ENCODE measurements at regions of chr1 and their contacts with region 1.

Region 1: GRCh38 chr1:28505406-28506187 is at the start of gene RCC1:
- DNase-seq: peak; percentile 94 to 98 (median 97)
- H3K4me3 ChIP-seq: peak within 1 kb of the TSS; percentile 76 to 96
- H3K4me3 Mint-ChIP-seq: peak within 1 kb of the TSS; percentile 94 to 100 (median 98)
- H3K27ac ChIP-seq: peak within 1 kb of the TSS; percentile 66
- H3K27ac Mint-ChIP-seq: peak within 1 kb of the TSS; percentile 96 to 99 (median 98)
- H3K4me1 ChIP-seq: peaks cover 37% of the 10 kb centered on the region
- H3K4me1 Mint-ChIP-seq: peaks cover 29 to 53% (median 38%) of the 10 kb centered on the region in 4 donors
- H3K27me3 ChIP-seq: no peaks in the 10 kb centered on the region
- H3K27me3 Mint-ChIP-seq: no peaks in the 10 kb centered on the region
- total RNA-seq, gene RCC1: 16.7 to 18.4 TPM

Region 2: DNA sequence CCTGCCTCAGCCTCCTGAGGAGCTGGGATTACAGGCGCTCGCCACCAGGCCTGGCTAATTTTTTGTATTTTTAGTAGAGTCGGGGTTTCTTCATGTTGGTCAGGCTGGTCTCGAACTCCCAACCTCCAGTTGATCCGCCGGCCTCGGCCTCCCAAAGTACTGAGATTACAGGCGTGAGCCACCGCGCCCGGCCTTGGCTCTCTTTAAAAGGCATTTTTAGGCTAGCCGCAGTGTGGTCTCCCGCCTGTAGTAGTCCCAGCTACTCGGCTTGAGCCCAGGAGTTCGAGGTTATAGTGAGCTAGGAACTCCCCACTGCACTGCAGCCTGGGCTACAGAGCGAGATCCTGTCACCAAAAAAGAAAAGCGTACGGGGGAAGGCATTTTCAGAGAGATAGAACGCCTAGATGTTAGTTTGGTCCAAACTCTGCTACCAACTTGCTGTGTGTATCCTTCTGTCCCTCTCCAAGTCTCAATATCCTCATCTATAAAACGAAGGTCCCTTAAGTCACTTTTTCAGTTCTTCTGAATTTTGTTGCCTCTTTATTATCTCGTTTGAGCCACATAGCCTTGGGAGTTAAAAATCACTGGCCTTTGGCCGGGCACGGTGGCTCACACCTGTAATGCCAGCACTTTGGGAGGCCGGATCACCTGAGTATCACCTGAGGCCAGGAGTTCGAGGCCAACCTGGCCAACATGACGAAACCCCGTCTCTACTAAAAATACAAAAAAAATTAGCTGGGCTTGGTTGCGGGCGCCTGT is 176.0 kb before region 1 on chr1:
- CTCF ChIA-PET with region 1: no interaction called
- POLR2A ChIA-PET with region 1: interaction called, 10 read pairs
- intact Hi-C with region 1: loop called (anchors 1 kb)
- DNase-seq: no peak
- H3K4me3 ChIP-seq: peak overlapping the region; percentile 51 to 53
- H3K4me3 Mint-ChIP-seq: peak overlapping the region; percentile 94 to 96 (median 95)
- H3K27ac ChIP-seq: peak overlapping the region; percentile 84
- H3K27ac Mint-ChIP-seq: peak overlapping the region; percentile 97 to 100 (median 99)
- H3K4me1 ChIP-seq: peaks cover 29% of the 10 kb centered on the region
- H3K4me1 Mint-ChIP-seq: peaks cover 19 to 39% (median 26%) of the 10 kb centered on the region in 4 donors
- H3K27me3 ChIP-seq: no peaks in the 10 kb centered on the region
- H3K27me3 Mint-ChIP-seq: peaks cover 0 to 2% of the 10 kb centered on the region in 2 donors

Region 3: DNA sequence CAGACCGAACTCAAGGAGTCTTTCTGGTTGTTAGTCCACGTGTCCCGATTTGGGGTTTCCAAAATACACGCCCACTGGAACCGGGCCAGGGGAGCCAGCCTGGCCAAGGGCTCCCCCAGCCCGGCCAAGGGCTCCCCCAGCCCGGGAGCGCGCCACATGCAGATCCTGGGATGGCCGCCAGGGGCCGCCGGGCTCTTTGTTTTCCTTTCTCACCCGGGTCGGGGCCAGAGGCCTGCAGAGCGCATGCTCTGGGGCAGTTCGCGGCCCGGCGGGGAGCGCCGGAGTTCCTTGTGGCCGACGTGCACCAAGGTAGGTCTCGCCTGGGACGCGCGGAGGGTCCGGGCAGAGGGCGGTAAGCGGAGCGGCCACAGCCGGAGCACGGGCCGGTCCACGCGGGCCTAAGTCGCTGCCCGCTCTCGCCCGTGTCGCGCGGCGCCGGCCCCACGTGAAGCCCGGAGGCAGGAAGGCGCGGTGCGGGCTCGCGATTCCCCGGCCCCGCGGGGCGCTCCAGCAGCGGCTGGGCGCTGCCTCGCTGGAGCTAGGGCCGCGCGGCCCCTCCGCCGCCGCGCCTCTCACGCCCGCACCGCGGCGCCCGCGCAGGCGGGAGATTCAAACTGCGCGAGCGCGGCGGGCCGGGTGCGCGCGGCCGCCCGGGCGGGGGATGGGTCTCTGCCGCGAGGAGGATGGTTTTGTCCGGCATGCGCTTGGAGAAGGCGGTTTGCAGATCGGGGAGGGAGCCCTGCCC is 12.6 kb after region 1 on chr1:
- CTCF ChIA-PET with region 1: interaction called, 7 read pairs
- POLR2A ChIA-PET with region 1: interaction called, 39 read pairs
- intact Hi-C with region 1: loop called (anchors 1 kb)
- DNase-seq: peak; percentile 84 to 87 (median 86)
- H3K4me3 ChIP-seq: peak overlapping the region; percentile 33 to 65
- H3K4me3 Mint-ChIP-seq: peak overlapping the region; percentile 85 to 92 (median 90)
- H3K27ac ChIP-seq: peak overlapping the region; percentile 56
- H3K27ac Mint-ChIP-seq: peak overlapping the region; percentile 67 to 94 (median 85)
- H3K4me1 ChIP-seq: peaks cover 27% of the 10 kb centered on the region
- H3K4me1 Mint-ChIP-seq: peaks cover 15 to 32% (median 21%) of the 10 kb centered on the region in 4 donors
- H3K27me3 ChIP-seq: no peaks in the 10 kb centered on the region
- H3K27me3 Mint-ChIP-seq: no peaks in the 10 kb centered on the region

Region 4: DNA sequence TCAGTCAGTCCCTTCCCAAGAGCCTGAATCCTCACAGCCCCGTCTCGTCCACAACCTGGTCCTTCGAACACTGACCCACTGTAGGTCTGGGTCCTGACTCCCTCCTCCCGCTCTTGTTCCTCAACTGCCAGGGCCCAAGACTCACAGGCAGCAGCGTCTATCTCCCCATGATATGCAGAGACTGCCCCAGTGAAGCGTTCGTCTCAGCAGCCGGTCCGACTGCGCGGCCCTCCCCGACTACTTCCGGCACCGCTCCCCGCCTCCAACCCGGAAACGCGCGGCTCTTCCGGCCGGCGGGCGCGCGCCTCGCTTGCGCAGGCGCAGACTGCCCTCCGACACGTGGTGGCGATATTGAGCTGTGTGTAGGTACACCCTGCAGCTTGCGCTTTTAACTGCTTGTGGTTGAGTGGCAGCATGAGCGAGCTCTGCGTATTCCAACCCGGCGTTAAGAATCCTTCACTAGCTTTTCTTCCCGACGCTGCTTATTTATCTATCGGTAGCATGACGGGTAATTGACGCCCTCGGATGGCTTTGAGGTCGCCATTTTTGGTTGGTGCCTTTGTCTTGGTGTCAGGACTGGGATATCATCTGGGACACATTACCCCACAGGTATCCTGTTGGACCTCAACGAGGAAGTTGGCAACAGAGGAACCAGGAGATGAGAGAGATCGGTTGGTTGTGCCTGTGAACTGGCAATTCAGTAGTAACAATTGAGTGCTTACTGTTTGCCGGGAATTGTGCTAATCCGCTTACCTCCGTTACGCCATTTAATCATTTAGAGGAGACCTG is 137.4 kb after region 1 on chr1 and contains the start of gene TAF12:
- CTCF ChIA-PET with region 1: interaction called, 3 read pairs
- POLR2A ChIA-PET with region 1: interaction called, 48 read pairs
- intact Hi-C with region 1: loop called (anchors 1 kb)
- DNase-seq: peak; percentile 88 to 92 (median 91)
- H3K4me3 ChIP-seq: peak within 1 kb of the TSS; percentile 89 to 99
- H3K4me3 Mint-ChIP-seq: peak within 1 kb of the TSS; percentile 96 to 100 (median 99)
- H3K27ac ChIP-seq: peak within 1 kb of the TSS; percentile 74
- H3K27ac Mint-ChIP-seq: peak within 1 kb of the TSS; percentile 97 to 100 (median 98)
- H3K4me1 ChIP-seq: peaks cover 48% of the 10 kb centered on the region
- H3K4me1 Mint-ChIP-seq: peaks cover 32 to 62% (median 46%) of the 10 kb centered on the region in 4 donors
- H3K27me3 ChIP-seq: no peaks in the 10 kb centered on the region
- H3K27me3 Mint-ChIP-seq: no peaks in the 10 kb centered on the region
- total RNA-seq, gene TAF12: 23.5 to 25.2 TPM

Region 5: DNA sequence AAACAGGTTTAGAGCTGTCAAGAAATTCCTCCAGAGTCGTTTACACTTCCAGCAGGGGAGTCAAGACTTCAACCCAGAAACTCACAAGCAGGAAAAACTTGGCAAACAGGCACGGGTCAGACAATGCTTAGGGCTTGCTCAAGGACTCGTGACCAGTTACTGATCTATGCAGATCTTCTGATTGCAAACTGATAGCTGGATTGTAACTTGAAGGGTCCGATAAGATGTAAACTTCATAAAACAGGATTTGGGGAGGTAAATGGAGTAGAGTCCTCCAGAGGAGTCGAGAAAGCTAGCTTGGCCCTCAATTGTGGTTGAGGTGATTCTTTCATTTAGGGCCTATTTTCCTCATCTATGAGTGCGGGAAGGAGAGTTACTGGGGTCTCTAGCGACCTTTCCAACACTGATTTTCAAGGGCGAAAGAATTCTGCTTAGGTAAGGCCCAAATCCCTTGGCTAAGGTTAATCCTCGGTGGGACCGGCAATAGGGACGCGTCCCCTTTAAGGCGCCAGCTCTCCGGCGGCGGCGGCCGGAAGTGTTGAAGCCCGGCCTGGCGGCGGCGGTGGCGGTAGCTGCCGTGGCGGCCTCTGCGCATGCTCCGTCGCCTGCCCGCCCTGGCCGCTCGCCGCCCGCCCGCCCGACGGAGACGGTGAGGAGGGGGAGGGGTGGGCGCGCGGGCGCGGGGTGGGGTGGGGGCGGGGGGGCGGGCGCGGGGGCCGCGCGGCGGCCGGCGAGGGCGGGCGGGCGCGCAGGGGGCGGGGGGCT is 162.8 kb after region 1 on chr1 and contains the start of gene GMEB1:
- CTCF ChIA-PET with region 1: no interaction called
- POLR2A ChIA-PET with region 1: interaction called, 29 read pairs
- intact Hi-C with region 1: loop called (anchors 1 kb)
- DNase-seq: peak; percentile 79 to 86 (median 84)
- H3K4me3 ChIP-seq: peak within 1 kb of the TSS; percentile 89 to 92
- H3K4me3 Mint-ChIP-seq: peak within 1 kb of the TSS; percentile 92 to 97 (median 93)
- H3K27ac ChIP-seq: peak within 1 kb of the TSS; percentile 88
- H3K27ac Mint-ChIP-seq: peak within 1 kb of the TSS; percentile 98 to 100 (median 98)
- H3K4me1 ChIP-seq: peaks cover 21% of the 10 kb centered on the region
- H3K4me1 Mint-ChIP-seq: peaks cover 13 to 26% (median 18%) of the 10 kb centered on the region in 4 donors
- H3K27me3 ChIP-seq: no peaks in the 10 kb centered on the region
- H3K27me3 Mint-ChIP-seq: no peaks in the 10 kb centered on the region
- total RNA-seq, gene GMEB1: 21.8 to 21.9 TPM

Measured in CD4-positive, alpha-beta memory T cell (primary cell).